Common myeloid progenitor, CD34-positive (primary cell): ENCODE measurements at regions of chr12 and their contacts with region 1.

Region 1: GRCh38 chr12:104695453-104696148 is 238.9 kb downstream of the CHST11 start:
- DNase-seq: peak; percentile 87 to 98 (median 97)
- H3K4me3 ChIP-seq: peak overlapping the region in 4 of 7 experiments; percentile 1 to 44 (median 26)
- H3K27ac ChIP-seq: peak overlapping the region; percentile 48 to 71
- H3K4me1 ChIP-seq: peaks cover 10 to 64% (median 48%) of the 10 kb centered on the region in 4 experiments
- H3K27me3 ChIP-seq: no peaks in the 10 kb centered on the region

Region 2: DNA sequence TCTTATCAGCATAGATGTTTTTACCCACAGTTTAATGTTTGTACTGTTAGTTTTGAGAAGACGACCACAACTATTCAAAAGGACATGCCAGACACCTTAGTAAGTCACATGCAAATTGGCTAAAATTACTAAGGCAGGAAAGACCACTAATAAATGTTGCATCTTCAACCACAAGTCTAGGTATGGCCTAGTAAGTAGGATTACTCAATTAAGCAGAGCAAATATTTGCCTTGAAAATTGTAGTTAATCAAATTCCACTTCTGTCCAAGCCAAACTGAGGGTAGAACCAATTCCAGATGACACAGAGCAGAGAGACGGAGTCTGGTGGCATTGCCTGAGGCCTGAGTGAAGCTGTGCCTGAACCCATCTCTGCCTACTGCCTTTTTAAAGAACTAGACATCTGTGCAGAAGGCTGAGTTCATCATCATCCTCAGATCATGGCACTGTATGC is 268.6 kb before region 1 on chr12:
- CTCF ChIA-PET with region 1: no interaction called
- POLR2A ChIA-PET with region 1: no interaction called
- DNase-seq: no peak
- H3K4me3 ChIP-seq: no peak overlapping the region
- H3K27ac ChIP-seq: no peak overlapping the region
- H3K4me1 ChIP-seq: no peaks in the 10 kb centered on the region
- H3K27me3 ChIP-seq: no peaks in the 10 kb centered on the region

Region 3: GRCh38 chr12:104682751-104683279 is 12.8 kb before region 1 on chr12:
- CTCF ChIA-PET with region 1: interaction called, 16 read pairs
- POLR2A ChIA-PET with region 1: interaction called, 3 read pairs
- DNase-seq: peak; percentile 74 to 88 (median 87)
- H3K4me3 ChIP-seq: peak overlapping the region in 5 of 7 experiments; percentile 26 to 53 (median 34)
- H3K27ac ChIP-seq: peak overlapping the region; percentile 60 to 63
- H3K4me1 ChIP-seq: peaks cover 28 to 92% (median 82%) of the 10 kb centered on the region in 4 experiments
- H3K27me3 ChIP-seq: no peaks in the 10 kb centered on the region